Naive thymus-derived CD4-positive, alpha-beta T cell (primary cell): ENCODE measurements at regions of chr9 and their contacts with region 1.

Region 1: GRCh38 chr9:99112750-99113413 is 8.0 kb downstream of the TGFBR1 start:
- DNase-seq: peak in 7 of 9 donors; percentile 73 to 88 (median 83)
- ATAC-seq: peak; percentile 97
- H3K4me3 ChIP-seq: peak overlapping the region; percentile 15
- H3K4me3 Mint-ChIP-seq: peak overlapping the region; percentile 62 to 83 (median 78)
- H3K27ac ChIP-seq: peak overlapping the region; percentile 34
- H3K27ac Mint-ChIP-seq: peak overlapping the region; percentile 65 to 90 (median 82)
- H3K4me1 ChIP-seq: peaks cover 81 to 82% of the 10 kb centered on the region in 2 donors
- H3K4me1 Mint-ChIP-seq: peaks cover 66 to 97% (median 93%) of the 10 kb centered on the region in 7 donors
- H3K27me3 ChIP-seq: no peaks in the 10 kb centered on the region
- H3K27me3 Mint-ChIP-seq: no peaks in the 10 kb centered on the region

Region 2: GRCh38 chr9:98807070-98807810 is 305.6 kb before region 1 on chr9 and contains the start of gene GALNT12:
- CTCF ChIA-PET with region 1: no interaction called
- POLR2A ChIA-PET with region 1: no interaction called
- intact Hi-C with region 1: loop called in 1 of 2 experiments (anchors 5 kb)
- DNase-seq: peak; percentile 31 to 60 (median 48)
- ATAC-seq: peak; percentile 87
- H3K4me3 ChIP-seq: peak within 1 kb of the TSS; percentile 56
- H3K4me3 Mint-ChIP-seq: peak within 1 kb of the TSS; percentile 80 to 95 (median 92)
- H3K27ac ChIP-seq: peak within 1 kb of the TSS; percentile 12
- H3K27ac Mint-ChIP-seq: peak within 1 kb of the TSS; percentile 7 to 91 (median 71)
- H3K4me1 ChIP-seq: peaks cover 11 to 16% of the 10 kb centered on the region in 2 donors
- H3K4me1 Mint-ChIP-seq: peaks cover 15 to 42% (median 37%) of the 10 kb centered on the region in 7 donors
- H3K27me3 ChIP-seq: no peaks in the 10 kb centered on the region
- H3K27me3 Mint-ChIP-seq: peaks cover 0 to 52% (median 0%) of the 10 kb centered on the region in 5 donors
- total RNA-seq, gene GALNT12: 6.2 to 14.3 (median 11.4) TPM

Region 3: GRCh38 chr9:99012942-99013512 is 99.9 kb before region 1 on chr9:
- CTCF ChIA-PET with region 1: interaction called, 3 read pairs
- POLR2A ChIA-PET with region 1: no interaction called
- intact Hi-C with region 1: loop called in 1 of 2 experiments (anchors 5 kb)
- DNase-seq: peak in 2 of 9 donors; percentile 18 to 30
- ATAC-seq: peak; percentile 63
- H3K4me3 ChIP-seq: no peak overlapping the region
- H3K4me3 Mint-ChIP-seq: peak overlapping the region; percentile 33 to 86 (median 78)
- H3K27ac ChIP-seq: peak overlapping the region; percentile 41
- H3K27ac Mint-ChIP-seq: peak overlapping the region in 8 of 9 donors; percentile 82 to 97 (median 92)
- H3K4me1 ChIP-seq: peaks cover 19 to 21% of the 10 kb centered on the region in 2 donors
- H3K4me1 Mint-ChIP-seq: peaks cover 15 to 38% (median 24%) of the 10 kb centered on the region in 7 donors
- H3K27me3 ChIP-seq: no peaks in the 10 kb centered on the region
- H3K27me3 Mint-ChIP-seq: no peaks in the 10 kb centered on the region

Region 4: GRCh38 chr9:99127376-99128132 is 14.7 kb after region 1 on chr9:
- CTCF ChIA-PET with region 1: interaction called, 5 read pairs
- POLR2A ChIA-PET with region 1: interaction called, 102 read pairs
- intact Hi-C with region 1: loop called in 1 of 2 experiments (anchors 2 kb)
- DNase-seq: no peak
- ATAC-seq: no peak
- H3K4me3 ChIP-seq: no peak overlapping the region
- H3K4me3 Mint-ChIP-seq: peak overlapping the region in 7 of 10 donors; percentile 1 to 48 (median 19)
- H3K27ac ChIP-seq: no peak overlapping the region
- H3K27ac Mint-ChIP-seq: peak overlapping the region; percentile 26 to 81 (median 59)
- H3K4me1 ChIP-seq: peaks cover 29 to 52% of the 10 kb centered on the region in 2 donors
- H3K4me1 Mint-ChIP-seq: peaks cover 42 to 97% (median 90%) of the 10 kb centered on the region in 7 donors
- H3K27me3 ChIP-seq: no peaks in the 10 kb centered on the region
- H3K27me3 Mint-ChIP-seq: no peaks in the 10 kb centered on the region

Region 5: GRCh38 chr9:99162759-99163364 is 50.0 kb after region 1 on chr9:
- CTCF ChIA-PET with region 1: no interaction called
- POLR2A ChIA-PET with region 1: interaction called, 3 read pairs
- intact Hi-C with region 1: loop called in 1 of 2 experiments (anchors 5 kb)
- DNase-seq: peak in 7 of 9 donors; percentile 22 to 59 (median 47)
- ATAC-seq: peak; percentile 61
- H3K4me3 ChIP-seq: no peak overlapping the region
- H3K4me3 Mint-ChIP-seq: peak overlapping the region in 1 of 10 donors; percentile 0
- H3K27ac ChIP-seq: no peak overlapping the region
- H3K27ac Mint-ChIP-seq: no peak overlapping the region
- H3K4me1 ChIP-seq: peaks cover 0 to 8% of the 10 kb centered on the region in 2 donors
- H3K4me1 Mint-ChIP-seq: peaks cover 9 to 32% (median 17%) of the 10 kb centered on the region in 7 donors
- H3K27me3 ChIP-seq: no peaks in the 10 kb centered on the region
- H3K27me3 Mint-ChIP-seq: peaks cover 7 to 32% (median 10%) of the 10 kb centered on the region in 5 donors